Gastrocnemius medialis (tissue), 4 donors: ENCODE measurements at regions of chr12 and their contacts with region 1.

Region 1: DNA sequence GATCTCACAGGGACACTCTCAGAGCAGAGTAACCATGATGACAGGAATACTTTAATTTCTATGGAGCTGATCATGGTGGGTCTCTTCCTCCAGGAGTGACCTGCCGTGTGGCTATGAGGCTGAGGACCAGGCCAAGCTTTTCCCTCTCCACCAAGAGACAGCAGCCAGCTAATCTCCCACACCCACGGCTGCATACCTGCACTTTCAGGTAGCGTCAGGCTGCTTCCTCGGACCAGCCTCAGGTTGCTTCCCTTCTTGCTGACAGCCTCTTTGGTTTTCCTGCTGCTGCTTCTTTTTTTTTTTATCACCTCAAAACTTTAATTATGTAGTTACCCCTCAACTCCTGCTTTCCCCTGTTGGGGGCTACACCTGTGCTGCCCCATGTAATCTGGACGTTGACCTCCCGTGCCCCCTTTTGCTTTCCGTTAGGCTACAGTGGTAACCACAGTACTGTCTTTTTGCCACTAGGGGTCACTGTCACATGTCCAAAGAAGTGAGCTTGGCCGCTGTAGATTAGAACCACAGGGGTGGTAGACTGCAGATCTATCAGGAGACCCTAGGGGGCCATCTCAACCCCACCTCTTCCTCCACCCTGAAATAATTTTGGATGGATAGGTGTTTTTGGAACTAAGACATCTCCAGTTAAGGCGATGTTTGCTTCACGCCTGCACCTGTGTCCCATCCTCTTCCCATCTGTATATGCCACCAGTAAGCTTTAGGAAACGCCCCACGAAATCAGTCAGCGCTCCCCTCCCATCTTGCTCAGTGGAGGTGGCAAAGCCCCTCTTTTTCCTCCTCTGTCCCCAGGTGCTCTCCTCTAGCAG is 7.8 kb upstream of the PIP4K2C start:
- DNase-seq: peak; percentile 39 to 48
- ATAC-seq: peak; percentile 92 to 99
- H3K4me3 ChIP-seq: no peak overlapping the region
- H3K27ac ChIP-seq: no peak overlapping the region
- H3K4me1 ChIP-seq: no peaks in the 10 kb centered on the region
- H3K27me3 ChIP-seq: no peaks in the 10 kb centered on the region
- CTCF ChIP-seq: peak; percentile 83 to 91 (median 86)
- POLR2A ChIP-seq: no peak

Region 2: GRCh38 chr12:57621497-57622292 is 38.5 kb after region 1 on chr12:
- in situ Hi-C with region 1: loop called in 3 of 4 experiments (anchors 5 to 10 kb)
- intact Hi-C with region 1: loop called (anchors 1 kb)
- DNase-seq: no peak
- ATAC-seq: peak; percentile 60 to 75
- H3K4me3 ChIP-seq: peak overlapping the region; percentile 37 to 85 (median 56)
- H3K27ac ChIP-seq: no peak overlapping the region
- H3K4me1 ChIP-seq: peaks cover 8 to 14% of the 10 kb centered on the region in 2 donors
- H3K27me3 ChIP-seq: peaks cover 53 to 69% (median 61%) of the 10 kb centered on the region in 3 donors
- CTCF ChIP-seq: peak; percentile 74 to 94 (median 87)
- POLR2A ChIP-seq: no peak

Region 3: GRCh38 chr12:57627501-57628279 is 44.5 kb after region 1 on chr12:
- in situ Hi-C with region 1: loop called in 3 of 4 experiments (anchors 5 to 10 kb)
- intact Hi-C with region 1: loop called (anchors 2 kb)
- DNase-seq: no peak
- ATAC-seq: no peak
- H3K4me3 ChIP-seq: no peak overlapping the region
- H3K27ac ChIP-seq: no peak overlapping the region
- H3K4me1 ChIP-seq: peaks cover 0 to 6% of the 10 kb centered on the region in 2 donors
- H3K27me3 ChIP-seq: peaks cover 12 to 24% (median 22%) of the 10 kb centered on the region in 3 donors
- CTCF ChIP-seq: no peak
- POLR2A ChIP-seq: no peak

Region 4: DNA sequence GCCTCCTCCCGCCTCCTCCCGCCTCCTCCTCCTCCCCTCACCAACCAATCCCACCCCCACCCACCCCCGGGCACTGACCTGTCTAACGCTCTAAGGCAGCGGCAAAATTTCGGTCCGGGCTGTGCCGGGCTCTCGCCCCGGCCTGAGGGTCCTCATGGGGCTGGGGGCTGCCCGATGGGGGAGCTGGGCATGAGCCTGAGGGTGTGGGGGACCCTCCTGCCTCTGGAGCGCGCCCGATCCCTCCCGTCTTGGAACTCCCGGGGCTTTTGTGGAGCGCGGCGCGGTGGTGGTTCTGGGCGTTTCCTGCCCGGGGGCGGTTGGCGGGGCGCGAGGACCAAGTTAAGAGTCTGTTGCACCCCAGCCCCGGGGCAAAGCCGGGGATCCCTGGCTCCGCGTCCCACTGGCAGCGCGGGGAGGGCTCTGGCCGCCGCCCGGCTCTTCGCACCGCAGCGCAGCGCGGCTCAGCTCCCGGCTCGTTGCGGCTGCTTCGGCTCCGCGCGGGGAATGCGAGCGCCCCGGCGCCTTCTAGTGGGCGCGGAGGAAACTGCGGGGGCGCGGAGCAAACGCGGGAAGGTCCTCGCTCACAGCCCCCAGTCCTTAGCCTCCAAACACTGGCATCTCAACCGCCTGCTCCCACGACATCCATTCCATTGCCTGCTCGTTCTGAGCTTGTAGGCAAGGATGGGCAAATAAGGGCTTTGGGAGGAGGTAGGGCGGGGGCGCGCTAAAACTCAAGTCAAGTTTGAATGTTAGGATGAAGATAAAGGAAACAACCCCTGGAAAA is 49.7 kb after region 1 on chr12 and contains the start of gene B4GALNT1:
- in situ Hi-C with region 1: loop called in 2 of 4 experiments (anchors 5 to 10 kb)
- intact Hi-C with region 1: loop called (anchors 2 kb)
- DNase-seq: no peak
- ATAC-seq: peak; percentile 87 to 88
- H3K4me3 ChIP-seq: peak within 1 kb of the TSS; percentile 70 to 82 (median 78)
- H3K27ac ChIP-seq: peak within 1 kb of the TSS; percentile 19 to 69 (median 64)
- H3K4me1 ChIP-seq: peaks cover 0 to 11% of the 10 kb centered on the region in 2 donors
- H3K27me3 ChIP-seq: peaks cover 0 to 3% (median 0%) of the 10 kb centered on the region in 3 donors
- CTCF ChIP-seq: peak; percentile 72 to 89 (median 88)
- POLR2A ChIP-seq: peak in 1 of 2 donors; percentile 37
- total RNA-seq, gene B4GALNT1: 13.2 to 25.5 (median 16.6) TPM

Region 5: GRCh38 chr12:57674691-57675090 is 91.5 kb after region 1 on chr12:
- in situ Hi-C with region 1: no loop called
- intact Hi-C with region 1: no loop called
- DNase-seq: no peak
- ATAC-seq: no peak
- H3K4me3 ChIP-seq: no peak overlapping the region
- H3K27ac ChIP-seq: no peak overlapping the region
- H3K4me1 ChIP-seq: no peaks in the 10 kb centered on the region
- H3K27me3 ChIP-seq: no peaks in the 10 kb centered on the region
- CTCF ChIP-seq: no peak
- POLR2A ChIP-seq: no peak